Sigmoid colon (tissue), 7 donors: ENCODE measurements at regions of chr6 and their contacts with region 1.

Region 1: GRCh38 chr6:80133020-80133419 is 26.5 kb downstream of the BCKDHB start:
- DNase-seq: peak; percentile 83
- H3K4me3 ChIP-seq: no peak overlapping the region
- H3K27ac ChIP-seq: no peak overlapping the region
- H3K4me1 ChIP-seq: peaks cover 0 to 23% (median 7%) of the 10 kb centered on the region in 4 donors
- H3K27me3 ChIP-seq: no peaks in the 10 kb centered on the region
- CTCF ChIP-seq: peak; percentile 23 to 64 (median 48)
- EP300 ChIP-seq: no peak
- POLR2A ChIP-seq: no peak

Region 2: DNA sequence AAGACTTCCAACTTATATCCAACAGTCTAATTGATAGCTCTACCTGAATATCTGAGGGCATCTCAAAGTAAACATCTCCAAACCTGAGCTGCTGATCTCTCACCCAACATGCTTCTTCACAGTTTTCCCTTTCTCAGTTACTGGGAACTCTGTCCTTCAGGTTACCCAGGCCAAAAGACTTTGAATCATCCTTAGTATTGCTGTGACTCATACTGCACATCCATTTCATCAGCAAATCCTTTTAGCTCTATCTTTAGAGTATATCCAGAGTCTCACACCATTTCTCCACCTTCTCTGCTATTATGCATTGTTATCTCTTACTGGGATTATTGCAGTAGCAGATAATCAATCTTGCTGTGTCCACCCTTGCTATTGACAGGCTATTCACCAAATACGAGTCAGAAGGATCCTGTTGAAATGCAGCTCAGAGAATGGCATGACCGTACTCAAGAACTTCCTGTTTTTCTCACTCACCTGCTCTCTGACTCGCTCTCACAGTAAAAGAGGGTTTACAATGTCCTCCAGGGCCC is 30.7 kb after region 1 on chr6:
- intact Hi-C with region 1: no loop called
- DNase-seq: no peak
- H3K4me3 ChIP-seq: no peak overlapping the region
- H3K27ac ChIP-seq: peak overlapping the region in 3 of 4 donors; percentile 25 to 49 (median 42)
- H3K4me1 ChIP-seq: peaks cover 0 to 22% (median 19%) of the 10 kb centered on the region in 4 donors
- H3K27me3 ChIP-seq: no peaks in the 10 kb centered on the region
- CTCF ChIP-seq: no peak
- EP300 ChIP-seq: no peak
- POLR2A ChIP-seq: no peak

Region 3: GRCh38 chr6:80280262-80281010 is 147.4 kb after region 1 on chr6:
- intact Hi-C with region 1: no loop called
- DNase-seq: no peak
- H3K4me3 ChIP-seq: no peak overlapping the region
- H3K27ac ChIP-seq: no peak overlapping the region
- H3K4me1 ChIP-seq: no peaks in the 10 kb centered on the region
- H3K27me3 ChIP-seq: no peaks in the 10 kb centered on the region
- CTCF ChIP-seq: no peak
- EP300 ChIP-seq: no peak
- POLR2A ChIP-seq: no peak

Region 4: GRCh38 chr6:80523531-80523997 is 390.5 kb after region 1 on chr6:
- intact Hi-C with region 1: no loop called
- DNase-seq: no peak
- H3K4me3 ChIP-seq: no peak overlapping the region
- H3K27ac ChIP-seq: peak overlapping the region in 2 of 4 donors; percentile 22 to 40
- H3K4me1 ChIP-seq: peaks cover 0 to 32% (median 27%) of the 10 kb centered on the region in 4 donors
- H3K27me3 ChIP-seq: no peaks in the 10 kb centered on the region
- CTCF ChIP-seq: no peak
- EP300 ChIP-seq: no peak
- POLR2A ChIP-seq: no peak

Region 5: GRCh38 chr6:80605165-80605989 is 472.4 kb after region 1 on chr6:
- intact Hi-C with region 1: loop called (anchors 10 kb)
- DNase-seq: no peak
- H3K4me3 ChIP-seq: no peak overlapping the region
- H3K27ac ChIP-seq: no peak overlapping the region
- H3K4me1 ChIP-seq: peaks cover 0 to 20% (median 17%) of the 10 kb centered on the region in 4 donors
- H3K27me3 ChIP-seq: no peaks in the 10 kb centered on the region
- CTCF ChIP-seq: peak in 3 of 4 experiments; percentile 12 to 57 (median 45)
- EP300 ChIP-seq: no peak
- POLR2A ChIP-seq: no peak